PC-9 (cell line): ENCODE measurements at regions of chr9 and their contacts with region 1.

Region 1: DNA sequence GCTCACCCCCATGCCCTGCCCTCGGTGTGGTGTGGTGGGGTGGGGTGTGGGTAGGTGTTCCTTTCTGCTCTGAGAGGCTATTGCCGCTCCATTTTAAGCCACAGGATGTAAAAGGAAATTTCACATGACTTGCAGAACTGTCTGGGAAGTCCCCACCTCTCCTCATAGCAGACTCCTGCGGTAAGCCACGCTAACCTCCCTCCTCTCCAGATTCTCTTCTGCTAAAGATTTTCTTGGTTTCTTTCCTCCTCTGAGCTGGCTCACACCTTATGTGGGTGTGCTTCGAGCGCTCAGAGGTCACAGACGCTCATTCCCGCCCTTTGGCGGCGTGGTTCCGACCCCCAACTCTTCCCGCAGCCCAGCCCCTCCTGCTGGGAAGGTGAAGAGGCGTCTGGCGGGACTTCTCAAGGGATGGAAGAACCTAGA is 32.9 kb upstream of the CDK20 start:
- DNase-seq: no peak
- H3K4me3 ChIP-seq: no peak overlapping the region
- H3K27ac ChIP-seq: no peak overlapping the region
- H3K4me1 ChIP-seq: no peaks in the 10 kb centered on the region
- H3K27me3 ChIP-seq: no peaks in the 10 kb centered on the region
- CTCF ChIP-seq: no peak

Region 2: GRCh38 chr9:87968155-87968554 is 39.1 kb before region 1 on chr9:
- CTCF ChIA-PET with region 1: no interaction called
- POLR2A ChIA-PET with region 1: no interaction called
- intact Hi-C with region 1: no loop called
- DNase-seq: no peak
- H3K4me3 ChIP-seq: no peak overlapping the region
- H3K27ac ChIP-seq: no peak overlapping the region
- H3K4me1 ChIP-seq: no peaks in the 10 kb centered on the region
- H3K27me3 ChIP-seq: no peaks in the 10 kb centered on the region
- CTCF ChIP-seq: no peak

Region 3: GRCh38 chr9:88018101-88018500 is 10.9 kb after region 1 on chr9:
- CTCF ChIA-PET with region 1: no interaction called
- POLR2A ChIA-PET with region 1: interaction called, 13 read pairs
- intact Hi-C with region 1: no loop called
- DNase-seq: no peak
- H3K4me3 ChIP-seq: no peak overlapping the region
- H3K27ac ChIP-seq: no peak overlapping the region
- H3K4me1 ChIP-seq: no peaks in the 10 kb centered on the region
- H3K27me3 ChIP-seq: no peaks in the 10 kb centered on the region
- CTCF ChIP-seq: no peak